ENCODE measurements at regions of chr11 and their contacts with region 1.

Region 1: GRCh38 chr11:10307442-10308207 is 2.8 kb downstream of the ADM start:
- DNase-seq: peak; percentile 90
- ATAC-seq: peak; percentile 77
- H3K4me3 Mint-ChIP-seq: peak overlapping the region; percentile 87
- H3K27ac Mint-ChIP-seq: peak overlapping the region; percentile 78
- H3K4me1 Mint-ChIP-seq: peaks cover 42% of the 10 kb centered on the region
- H3K27me3 Mint-ChIP-seq: peaks cover 68% of the 10 kb centered on the region

Region 2: GRCh38 chr11:9757809-9758636 is 549.6 kb before region 1 on chr11:
- CTCF ChIA-PET with region 1: interaction called, 91 read pairs
- DNase-seq: peak; percentile 93
- ATAC-seq: peak; percentile 82
- H3K4me3 Mint-ChIP-seq: peak overlapping the region; percentile 74
- H3K27ac Mint-ChIP-seq: peak overlapping the region; percentile 76
- H3K4me1 Mint-ChIP-seq: peaks cover 45% of the 10 kb centered on the region
- H3K27me3 Mint-ChIP-seq: no peaks in the 10 kb centered on the region

Region 3: GRCh38 chr11:10181811-10182210 is 125.8 kb before region 1 on chr11:
- CTCF ChIA-PET with region 1: interaction called, 12 read pairs
- DNase-seq: no peak
- ATAC-seq: no peak
- H3K4me3 Mint-ChIP-seq: no peak overlapping the region
- H3K27ac Mint-ChIP-seq: no peak overlapping the region
- H3K4me1 Mint-ChIP-seq: peaks cover 2% of the 10 kb centered on the region
- H3K27me3 Mint-ChIP-seq: no peaks in the 10 kb centered on the region

Region 4: DNA sequence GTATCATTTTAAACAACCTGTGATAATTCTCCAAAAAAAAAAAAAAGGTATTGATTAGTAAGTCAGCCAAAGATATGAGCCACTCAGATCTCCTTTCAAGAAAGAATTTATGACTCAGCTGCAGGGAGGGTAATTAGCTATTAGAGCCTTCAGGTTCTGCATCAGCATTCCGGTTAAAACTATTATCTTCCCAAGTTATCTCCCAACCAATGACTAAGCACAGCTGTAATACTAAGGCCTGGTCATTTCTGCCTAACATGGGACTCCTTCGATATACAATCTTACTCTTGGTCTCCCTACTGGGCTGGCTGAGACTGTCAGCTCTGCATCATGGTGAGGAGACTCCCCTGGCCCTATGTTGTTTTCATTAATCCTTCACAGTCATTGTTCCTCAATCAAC is 74.0 kb before region 1 on chr11:
- CTCF ChIA-PET with region 1: no interaction called
- DNase-seq: no peak
- ATAC-seq: no peak
- H3K4me3 Mint-ChIP-seq: no peak overlapping the region
- H3K27ac Mint-ChIP-seq: no peak overlapping the region
- H3K4me1 Mint-ChIP-seq: no peaks in the 10 kb centered on the region
- H3K27me3 Mint-ChIP-seq: no peaks in the 10 kb centered on the region

Region 5: GRCh38 chr11:10293423-10294289 is 14.0 kb before region 1 on chr11 and contains the start of gene SBF2:
- CTCF ChIA-PET with region 1: interaction called, 42 read pairs
- DNase-seq: peak; percentile 83
- ATAC-seq: peak; percentile 68
- H3K4me3 Mint-ChIP-seq: peak within 1 kb of the TSS; percentile 70
- H3K27ac Mint-ChIP-seq: no peak within 1 kb of the TSS
- H3K4me1 Mint-ChIP-seq: peaks cover 34% of the 10 kb centered on the region
- H3K27me3 Mint-ChIP-seq: peaks cover 52% of the 10 kb centered on the region
- total RNA-seq, gene SBF2: 4.6 to 8.3 TPM

Region 6: DNA sequence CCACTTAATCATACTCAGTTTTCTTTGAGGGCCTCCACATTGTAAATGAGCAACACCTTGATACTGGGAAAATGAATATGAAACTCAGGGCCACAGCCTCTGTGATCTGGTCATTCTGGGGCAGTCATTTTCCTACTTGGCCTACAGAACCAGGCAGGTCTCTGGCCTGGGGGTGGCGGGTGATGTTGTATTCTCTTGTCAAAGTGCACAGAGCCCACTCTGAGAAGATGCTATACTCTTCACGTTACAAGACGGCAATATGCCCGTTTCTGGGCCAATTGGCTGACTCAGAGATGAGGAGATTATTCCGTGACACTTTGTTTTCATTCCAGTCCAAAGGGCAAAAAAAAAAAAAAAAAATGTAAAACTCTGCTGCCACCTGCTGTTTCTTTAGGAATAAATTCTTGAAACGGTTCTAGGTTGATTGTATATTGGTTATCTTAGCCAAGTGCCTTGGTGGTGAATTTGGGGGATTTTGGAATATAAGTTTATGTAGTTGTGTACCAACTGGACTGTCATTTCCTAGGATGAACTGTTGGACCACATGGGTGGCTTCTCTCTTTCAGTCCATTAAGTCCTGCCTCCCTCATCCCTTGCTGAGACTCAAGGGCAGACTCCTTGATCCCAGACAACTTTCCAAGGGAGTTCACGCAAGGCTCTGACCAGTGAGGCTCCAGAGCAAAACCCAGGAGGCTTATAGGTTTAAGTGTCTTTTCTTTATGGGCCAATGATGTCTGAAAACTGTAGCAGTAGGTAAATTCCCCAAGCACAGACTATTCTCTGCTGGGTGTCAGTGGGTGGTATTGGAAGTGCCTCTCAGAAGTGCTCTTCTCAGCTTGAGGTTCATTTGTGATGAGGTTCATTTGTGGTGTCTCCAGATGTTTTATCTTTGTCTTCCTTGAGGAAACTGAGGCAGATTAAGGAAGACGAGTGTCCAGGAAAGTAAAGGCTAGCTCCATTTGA is 15.5 kb after region 1 on chr11:
- CTCF ChIA-PET with region 1: interaction called, 28 read pairs
- DNase-seq: peak; percentile 63
- ATAC-seq: peak; percentile 90
- H3K4me3 Mint-ChIP-seq: no peak overlapping the region
- H3K27ac Mint-ChIP-seq: peak overlapping the region; percentile 48
- H3K4me1 Mint-ChIP-seq: peaks cover 4% of the 10 kb centered on the region
- H3K27me3 Mint-ChIP-seq: peaks cover 30% of the 10 kb centered on the region